ENCODE measurements at regions of chr12 and their contacts with region 1.

Region 1: DNA sequence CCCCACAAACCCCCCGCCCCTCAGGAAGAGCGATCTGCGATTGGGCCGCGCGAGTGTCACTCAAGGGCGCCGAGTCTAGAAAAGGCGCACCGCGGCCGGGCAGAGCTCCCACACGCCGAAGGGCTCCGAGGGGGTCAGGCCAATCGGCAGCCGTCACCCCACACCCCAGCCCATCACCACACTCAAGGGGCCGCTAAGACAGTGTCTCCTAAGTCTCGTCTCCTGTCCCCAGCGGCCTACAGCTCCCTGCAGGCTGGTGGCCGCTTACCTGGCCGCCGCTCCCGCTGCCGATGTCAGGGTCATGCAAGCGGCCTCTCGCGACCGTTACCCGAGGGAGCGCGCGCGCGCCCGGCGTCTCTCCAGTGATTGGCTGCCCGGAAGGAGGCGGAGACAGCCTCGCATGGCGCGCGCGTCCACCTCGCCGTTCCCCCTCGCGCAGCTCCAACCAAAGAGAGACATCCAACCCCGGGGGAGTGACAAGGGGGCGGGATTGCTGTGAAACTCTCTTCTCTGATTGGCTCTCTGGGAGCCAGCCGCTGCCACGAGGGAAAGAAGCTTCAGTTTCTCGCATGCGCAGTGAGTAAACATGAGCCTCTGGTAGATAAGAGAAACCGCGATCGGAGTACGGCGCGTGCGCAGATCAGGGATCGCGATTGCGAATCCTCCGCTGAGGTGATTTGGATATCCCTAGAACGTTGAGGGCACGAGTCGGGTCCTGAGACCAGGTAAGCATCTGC is at the starts of genes MPHOSPH9 and MTRFR:
- DNase-seq: peak; percentile 94 to 100 (median 100)
- ATAC-seq: peak; percentile 97
- H3K4me3 ChIP-seq: peak within 1 kb of the TSS; percentile 97
- H3K4me3 Mint-ChIP-seq: peak within 1 kb of the TSS; percentile 93 to 100 (median 98)
- H3K27ac ChIP-seq: peak within 1 kb of the TSS; percentile 95
- H3K27ac Mint-ChIP-seq: peak within 1 kb of the TSS; percentile 96 to 99 (median 99)
- H3K4me1 ChIP-seq: peaks cover 31 to 41% of the 10 kb centered on the region in 2 donors
- H3K4me1 Mint-ChIP-seq: peaks cover 43 to 88% (median 65%) of the 10 kb centered on the region in 7 donors
- H3K27me3 ChIP-seq: no peaks in the 10 kb centered on the region
- H3K27me3 Mint-ChIP-seq: peaks cover 0 to 4% (median 0%) of the 10 kb centered on the region in 5 donors
- total RNA-seq, gene MPHOSPH9: 71.0 to 102 (median 82.4) TPM
- total RNA-seq, gene MTRFR: 26.8 to 56.9 (median 39.5) TPM

Region 2: DNA sequence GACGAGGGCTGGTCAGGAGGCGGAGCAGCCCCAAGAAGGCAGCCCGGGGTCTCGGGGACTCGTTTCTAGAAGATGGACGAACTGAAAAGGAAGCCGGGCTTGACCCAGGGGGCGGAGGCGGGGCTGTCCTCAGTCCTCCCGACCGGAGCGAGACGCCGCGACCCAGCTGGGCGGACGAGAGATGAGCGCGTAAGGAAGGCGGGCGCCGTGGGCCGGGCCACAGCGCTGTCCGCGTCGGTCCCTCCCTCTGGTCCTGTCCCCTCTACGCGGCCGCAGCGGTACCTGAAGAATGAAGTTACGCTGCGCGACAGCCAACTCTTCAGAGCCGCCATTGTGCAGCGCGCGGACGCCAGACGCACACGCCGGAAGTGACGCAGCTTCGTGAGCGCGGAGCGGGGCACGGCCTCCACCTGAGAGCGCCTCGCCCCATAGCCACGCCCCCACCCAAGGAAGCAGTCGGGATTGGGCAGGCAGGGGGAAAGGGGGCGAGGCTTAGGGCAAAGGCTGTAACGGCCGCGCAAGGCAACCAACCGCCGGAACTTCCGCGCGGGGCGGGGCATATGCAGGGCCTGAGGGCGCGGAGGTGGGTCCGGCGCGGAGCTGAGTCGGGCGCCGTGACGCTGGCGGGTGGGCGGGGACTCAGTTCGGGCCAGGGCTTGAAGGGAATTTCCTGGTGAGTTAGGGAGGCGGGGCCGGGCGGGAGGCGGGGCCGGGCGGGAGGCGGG is 1007.1 kb before region 1 on chr12 and contains the start of gene DIABLO:
- CTCF ChIA-PET with region 1: no interaction called
- POLR2A ChIA-PET with region 1: interaction called, 3 read pairs
- intact Hi-C with region 1: loop called in 1 of 2 experiments (anchors 5 kb)
- DNase-seq: peak; percentile 97 to 100 (median 100)
- ATAC-seq: peak; percentile 96
- H3K4me3 ChIP-seq: peak within 1 kb of the TSS; percentile 90
- H3K4me3 Mint-ChIP-seq: peak within 1 kb of the TSS; percentile 75 to 95 (median 90)
- H3K27ac ChIP-seq: peak within 1 kb of the TSS; percentile 99
- H3K27ac Mint-ChIP-seq: peak within 1 kb of the TSS; percentile 76 to 96 (median 93)
- H3K4me1 ChIP-seq: peaks cover 24 to 34% of the 10 kb centered on the region in 2 donors
- H3K4me1 Mint-ChIP-seq: peaks cover 23 to 53% (median 47%) of the 10 kb centered on the region in 7 donors
- H3K27me3 ChIP-seq: no peaks in the 10 kb centered on the region
- H3K27me3 Mint-ChIP-seq: no peaks in the 10 kb centered on the region
- total RNA-seq, gene DIABLO: 41.3 to 94.1 (median 50.1) TPM

Region 3: GRCh38 chr12:122834104-122834920 is 398.7 kb before region 1 on chr12:
- CTCF ChIA-PET with region 1: no interaction called
- POLR2A ChIA-PET with region 1: interaction called, 19 read pairs
- intact Hi-C with region 1: no loop called
- DNase-seq: peak in 2 of 9 donors; percentile 27 to 33
- ATAC-seq: peak; percentile 30
- H3K4me3 ChIP-seq: peak overlapping the region; percentile 55
- H3K4me3 Mint-ChIP-seq: peak overlapping the region; percentile 85 to 99 (median 92)
- H3K27ac ChIP-seq: peak overlapping the region; percentile 50
- H3K27ac Mint-ChIP-seq: peak overlapping the region; percentile 87 to 98 (median 95)
- H3K4me1 ChIP-seq: peaks cover 0 to 13% of the 10 kb centered on the region in 2 donors
- H3K4me1 Mint-ChIP-seq: peaks cover 30 to 48% (median 44%) of the 10 kb centered on the region in 7 donors
- H3K27me3 ChIP-seq: no peaks in the 10 kb centered on the region
- H3K27me3 Mint-ChIP-seq: peaks cover 0 to 29% (median 0%) of the 10 kb centered on the region in 5 donors

Region 4: DNA sequence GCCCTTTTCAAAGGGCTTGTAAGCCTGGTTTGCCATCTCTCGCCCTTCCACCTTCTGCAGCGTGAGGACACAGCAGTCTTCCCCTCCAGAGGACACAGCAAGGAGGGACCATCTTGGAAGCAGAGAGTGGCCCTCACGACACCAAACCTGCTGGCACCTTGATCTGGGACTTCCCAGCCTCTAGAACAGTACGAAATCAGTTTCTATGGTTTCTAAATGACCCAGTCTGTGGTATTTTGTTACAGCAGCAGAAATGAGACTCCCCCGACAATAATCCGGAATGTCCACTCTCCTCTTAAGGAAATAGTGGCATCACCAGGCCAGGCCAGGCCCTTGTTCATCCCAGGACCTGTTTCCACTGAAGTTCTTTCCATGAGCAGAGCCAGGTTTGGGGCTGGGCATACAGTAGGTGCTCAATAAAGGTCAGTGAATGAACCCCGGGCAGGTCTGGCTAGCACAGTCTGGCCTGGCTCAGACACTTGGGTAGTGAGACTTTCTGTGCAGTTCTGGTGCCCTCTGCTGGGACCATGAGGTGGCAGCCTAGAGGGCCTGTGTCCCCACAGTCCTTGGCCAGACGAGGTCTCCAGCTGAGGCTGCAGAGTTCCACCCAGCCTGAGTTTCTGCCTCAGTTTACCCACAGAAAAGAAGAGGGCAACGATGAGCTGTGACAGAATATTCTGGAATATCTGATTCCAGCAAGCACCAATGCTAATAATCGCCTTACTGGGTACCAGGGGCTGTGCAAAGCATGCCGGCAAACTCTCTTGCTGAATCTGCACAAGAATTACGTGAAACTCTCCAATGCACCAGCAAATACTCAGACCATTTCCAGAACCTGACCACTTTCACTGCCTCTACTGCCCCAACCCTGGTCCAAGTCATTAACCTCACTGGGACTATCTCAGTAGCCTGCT is 280.7 kb before region 1 on chr12:
- CTCF ChIA-PET with region 1: interaction called, 3 read pairs
- POLR2A ChIA-PET with region 1: no interaction called
- intact Hi-C with region 1: loop called in 1 of 2 experiments (anchors 1 kb)
- DNase-seq: peak; percentile 53 to 73 (median 68)
- ATAC-seq: peak; percentile 94
- H3K4me3 ChIP-seq: no peak overlapping the region
- H3K4me3 Mint-ChIP-seq: no peak overlapping the region
- H3K27ac ChIP-seq: no peak overlapping the region
- H3K27ac Mint-ChIP-seq: peak overlapping the region in 4 of 9 donors; percentile 22 to 51 (median 35)
- H3K4me1 ChIP-seq: peaks cover 0 to under 1% of the 10 kb centered on the region in 2 donors
- H3K4me1 Mint-ChIP-seq: peaks cover 0 to 15% (median 5%) of the 10 kb centered on the region in 7 donors
- H3K27me3 ChIP-seq: no peaks in the 10 kb centered on the region
- H3K27me3 Mint-ChIP-seq: no peaks in the 10 kb centered on the region

Region 5: DNA sequence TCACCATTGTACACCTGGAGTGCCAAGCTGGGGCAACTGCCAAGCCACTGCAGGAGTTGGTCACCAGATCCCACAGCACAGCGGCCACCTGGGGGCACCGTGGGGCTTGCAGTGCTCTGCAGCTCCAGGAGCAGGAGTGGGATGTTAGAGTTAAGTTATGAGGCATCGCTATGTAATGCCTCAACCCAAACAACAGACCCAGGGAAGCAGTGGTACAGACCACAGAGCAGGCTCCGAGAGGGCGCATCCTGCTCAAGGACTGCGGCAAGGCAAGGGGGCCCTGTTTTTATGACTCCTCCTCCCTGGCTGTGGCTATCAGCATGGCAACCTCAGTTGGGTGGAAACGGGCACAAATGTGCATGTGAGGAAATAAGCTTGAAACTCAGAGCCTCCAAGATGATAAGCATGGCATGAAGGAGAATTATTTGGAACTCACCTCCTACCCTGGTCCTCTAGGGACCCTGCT is 189.4 kb before region 1 on chr12:
- CTCF ChIA-PET with region 1: interaction called, 75 read pairs
- POLR2A ChIA-PET with region 1: interaction called, 33 read pairs
- intact Hi-C with region 1: loop called (anchors 1 kb)
- DNase-seq: peak; percentile 36 to 83 (median 71)
- ATAC-seq: peak; percentile 92
- H3K4me3 ChIP-seq: no peak overlapping the region
- H3K4me3 Mint-ChIP-seq: peak overlapping the region in 9 of 10 donors; percentile 13 to 69 (median 56)
- H3K27ac ChIP-seq: peak overlapping the region; percentile 38
- H3K27ac Mint-ChIP-seq: peak overlapping the region; percentile 40 to 95 (median 84)
- H3K4me1 ChIP-seq: peaks cover 10 to 17% of the 10 kb centered on the region in 2 donors
- H3K4me1 Mint-ChIP-seq: peaks cover 27 to 65% (median 52%) of the 10 kb centered on the region in 7 donors
- H3K27me3 ChIP-seq: no peaks in the 10 kb centered on the region
- H3K27me3 Mint-ChIP-seq: no peaks in the 10 kb centered on the region

Region 6: GRCh38 chr12:123150744-123151456 is 82.1 kb before region 1 on chr12 and contains the start of gene PITPNM2:
- CTCF ChIA-PET with region 1: interaction called, 6 read pairs
- POLR2A ChIA-PET with region 1: interaction called, 38 read pairs
- intact Hi-C with region 1: loop called (anchors 1 to 2 kb)
- DNase-seq: peak; percentile 44 to 78 (median 68)
- ATAC-seq: peak; percentile 90
- H3K4me3 ChIP-seq: peak within 1 kb of the TSS; percentile 74
- H3K4me3 Mint-ChIP-seq: peak within 1 kb of the TSS; percentile 83 to 95 (median 89)
- H3K27ac ChIP-seq: peak within 1 kb of the TSS; percentile 82
- H3K27ac Mint-ChIP-seq: peak within 1 kb of the TSS; percentile 80 to 92 (median 90)
- H3K4me1 ChIP-seq: peaks cover 6 to 29% of the 10 kb centered on the region in 2 donors
- H3K4me1 Mint-ChIP-seq: peaks cover 24 to 48% (median 40%) of the 10 kb centered on the region in 7 donors
- H3K27me3 ChIP-seq: no peaks in the 10 kb centered on the region
- H3K27me3 Mint-ChIP-seq: peaks cover 0 to 20% (median 0%) of the 10 kb centered on the region in 5 donors
- total RNA-seq, gene PITPNM2: 22.2 to 65.3 (median 56.6) TPM

Region 7: DNA sequence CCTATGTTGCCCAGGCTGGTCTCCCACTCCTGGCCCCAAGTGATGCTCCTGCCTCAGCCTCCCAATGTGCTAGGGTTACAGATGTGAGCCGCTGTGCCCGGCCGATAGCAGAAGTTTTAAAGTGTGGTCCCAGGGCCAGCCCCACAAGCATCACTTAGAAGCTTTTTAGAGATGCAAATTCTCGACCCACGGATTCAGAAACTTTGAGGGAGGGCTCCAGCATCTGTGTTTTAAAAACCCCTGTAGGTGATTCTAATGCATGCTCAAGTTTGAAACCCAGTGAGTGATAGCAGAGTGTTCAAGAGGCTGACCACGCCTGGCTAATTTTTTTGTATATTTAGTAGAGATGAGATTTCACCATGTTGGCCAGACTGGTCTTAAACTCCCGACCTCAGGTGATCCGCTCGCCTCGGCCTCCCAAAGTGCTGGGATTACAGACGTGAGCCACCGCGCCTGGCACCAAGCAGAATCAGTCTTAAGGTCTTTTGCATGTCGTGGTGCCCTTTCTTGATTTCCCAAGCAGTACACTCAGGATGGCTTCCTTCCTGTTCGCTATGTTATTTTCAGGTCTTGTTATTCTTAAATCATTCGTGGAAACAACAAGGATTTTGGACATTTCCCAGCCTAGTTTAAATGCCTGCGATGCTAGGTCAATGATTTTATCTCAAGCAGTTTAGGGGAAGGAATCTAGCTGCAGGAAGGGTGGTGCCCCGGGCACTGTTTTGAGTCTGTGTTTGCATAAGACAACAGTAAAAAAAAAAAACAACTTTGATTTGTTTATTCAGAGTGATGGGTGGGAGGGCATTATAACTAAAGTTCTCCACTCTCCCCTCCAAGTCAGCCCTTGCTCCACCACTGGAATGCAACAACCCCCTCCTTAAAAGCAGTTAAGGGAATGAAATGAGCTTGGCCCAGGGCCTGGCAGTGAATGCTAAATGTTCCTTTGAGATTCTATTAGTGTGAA is 212.7 kb after region 1 on chr12:
- CTCF ChIA-PET with region 1: no interaction called
- POLR2A ChIA-PET with region 1: no interaction called
- intact Hi-C with region 1: loop called in 1 of 2 experiments (anchors 5 kb)
- DNase-seq: no peak
- ATAC-seq: no peak
- H3K4me3 ChIP-seq: no peak overlapping the region
- H3K4me3 Mint-ChIP-seq: peak overlapping the region in 9 of 10 donors; percentile 4 to 67 (median 50)
- H3K27ac ChIP-seq: no peak overlapping the region
- H3K27ac Mint-ChIP-seq: peak overlapping the region in 8 of 9 donors; percentile 52 to 84 (median 72)
- H3K4me1 ChIP-seq: peaks cover 0 to 18% of the 10 kb centered on the region in 2 donors
- H3K4me1 Mint-ChIP-seq: peaks cover 8 to 39% (median 28%) of the 10 kb centered on the region in 7 donors
- H3K27me3 ChIP-seq: no peaks in the 10 kb centered on the region
- H3K27me3 Mint-ChIP-seq: no peaks in the 10 kb centered on the region

Measured in naive thymus-derived CD4-positive, alpha-beta T cell (primary cell).